ENCODE measurements at regions of chr11 and their contacts with region 1.

Region 1: DNA sequence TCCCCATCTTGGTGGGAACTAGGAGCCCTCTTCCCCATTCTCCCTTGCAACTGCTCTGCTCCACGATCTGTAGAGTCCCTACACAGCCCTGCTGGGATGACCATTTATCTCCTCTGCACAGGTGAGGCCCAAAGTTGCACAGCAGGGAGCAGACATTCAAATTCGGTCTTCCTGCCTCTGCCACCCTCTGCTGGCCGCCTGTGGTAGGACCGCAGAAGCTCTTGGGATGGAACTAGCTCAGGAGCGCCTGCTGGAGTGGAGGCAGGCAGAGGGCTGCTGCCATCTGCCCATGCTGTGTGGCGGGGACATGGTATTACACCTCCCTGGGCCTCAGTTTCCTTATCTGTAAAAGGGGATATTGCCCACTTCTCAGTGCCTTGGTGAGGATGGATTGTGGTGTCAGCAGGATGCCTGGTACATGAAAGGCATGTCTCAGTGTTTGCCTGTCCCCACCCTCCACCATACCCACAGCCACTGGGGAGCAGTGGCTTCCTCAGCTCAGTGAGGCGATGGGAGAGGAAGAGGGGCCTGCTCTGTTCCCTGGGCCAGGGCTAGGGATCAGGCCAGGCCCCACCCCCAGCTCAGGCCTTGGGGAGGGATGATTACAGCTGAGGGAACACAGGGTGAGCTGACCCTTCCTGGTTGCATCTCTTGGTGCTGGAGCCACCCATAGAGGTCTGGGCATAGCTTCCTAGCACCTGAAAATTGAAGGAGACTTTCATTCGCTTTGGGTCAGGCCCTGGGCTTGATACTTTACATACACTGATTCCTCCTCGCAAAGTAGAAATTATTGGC is 11.3 kb upstream of the OMP start:
- DNase-seq: peak; percentile 86 to 96 (median 94)
- ATAC-seq: peak; percentile 58
- H3K4me3 ChIP-seq: no peak overlapping the region
- H3K4me1 ChIP-seq: peaks cover 71% of the 10 kb centered on the region
- CTCF ChIP-seq: peak; percentile 94

Region 2: GRCh38 chr11:76835928-76836612 is 255.3 kb before region 1 on chr11:
- intact Hi-C with region 1: no loop called
- DNase-seq: peak; percentile 70 to 86 (median 73)
- ATAC-seq: peak; percentile 84
- H3K4me3 ChIP-seq: no peak overlapping the region
- H3K4me1 ChIP-seq: peaks cover 34% of the 10 kb centered on the region
- CTCF ChIP-seq: no peak

Region 3: GRCh38 chr11:77009533-77010160 is 81.7 kb before region 1 on chr11:
- intact Hi-C with region 1: no loop called
- DNase-seq: no peak
- ATAC-seq: peak; percentile 88
- H3K4me3 ChIP-seq: no peak overlapping the region
- H3K4me1 ChIP-seq: no peaks in the 10 kb centered on the region
- CTCF ChIP-seq: no peak

Region 4: GRCh38 chr11:77047007-77047927 is 44.1 kb before region 1 on chr11:
- intact Hi-C with region 1: loop called (anchors 5 kb)
- DNase-seq: peak in 2 of 3 donors; percentile 64 to 95
- ATAC-seq: peak; percentile 74
- H3K4me3 ChIP-seq: no peak overlapping the region
- H3K4me1 ChIP-seq: peaks cover 20% of the 10 kb centered on the region
- CTCF ChIP-seq: peak; percentile 53

Region 5: GRCh38 chr11:77140231-77140851 is 49.0 kb after region 1 on chr11:
- intact Hi-C with region 1: no loop called
- DNase-seq: peak in 1 of 3 donors; percentile 32
- ATAC-seq: peak; percentile 10
- H3K4me3 ChIP-seq: no peak overlapping the region
- H3K4me1 ChIP-seq: no peaks in the 10 kb centered on the region
- CTCF ChIP-seq: no peak

Measured in mucosa of descending colon (tissue), 3 donors.